ENCODE measurements at regions of chr13 and their contacts with region 1.

Region 1: GRCh38 chr13:108895220-108895704 is 265.9 kb downstream of the MYO16 start:
- DNase-seq: no peak
- ATAC-seq: no peak

Region 2: DNA sequence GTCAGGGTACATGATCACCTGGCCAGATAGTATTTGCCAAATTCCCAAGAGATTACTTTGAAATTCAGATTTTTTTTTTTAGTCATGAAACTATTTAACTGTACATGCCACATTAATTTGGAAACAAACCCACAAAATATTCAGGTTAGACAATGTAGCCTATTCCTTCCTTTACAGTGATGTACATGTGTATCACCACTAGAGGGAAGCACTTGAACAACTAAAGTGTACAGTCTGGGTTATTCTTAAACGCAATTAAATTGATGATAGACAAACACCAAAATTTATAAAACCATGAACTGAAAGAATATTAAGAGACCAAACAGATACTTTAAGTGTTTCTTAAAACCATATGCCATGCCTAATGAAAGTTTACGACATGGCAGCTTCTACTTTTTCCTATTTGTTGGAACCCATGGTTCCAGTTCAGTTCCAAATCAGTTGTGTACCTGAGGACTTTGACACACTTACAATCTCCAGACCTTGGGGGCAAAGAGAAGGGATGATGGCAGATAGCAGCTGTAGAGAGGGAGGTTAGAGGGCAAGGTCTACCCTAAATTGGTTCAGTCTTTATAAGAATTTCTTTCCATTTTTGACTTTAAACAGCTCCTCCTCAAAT is 572.9 kb before region 1 on chr13:
- intact Hi-C with region 1: loop called (anchors 2 kb)
- DNase-seq: no peak
- ATAC-seq: peak; percentile 71

Region 3: GRCh38 chr13:108342369-108343289 is 552.6 kb before region 1 on chr13:
- intact Hi-C with region 1: loop called (anchors 5 kb)
- DNase-seq: no peak
- ATAC-seq: peak; percentile 60

Region 4: GRCh38 chr13:108609353-108609752 is 285.9 kb before region 1 on chr13:
- intact Hi-C with region 1: loop called (anchors 1 kb)
- DNase-seq: no peak
- ATAC-seq: no peak